ENCODE measurements at regions of chr6 and their contacts with region 1.

Region 1: DNA sequence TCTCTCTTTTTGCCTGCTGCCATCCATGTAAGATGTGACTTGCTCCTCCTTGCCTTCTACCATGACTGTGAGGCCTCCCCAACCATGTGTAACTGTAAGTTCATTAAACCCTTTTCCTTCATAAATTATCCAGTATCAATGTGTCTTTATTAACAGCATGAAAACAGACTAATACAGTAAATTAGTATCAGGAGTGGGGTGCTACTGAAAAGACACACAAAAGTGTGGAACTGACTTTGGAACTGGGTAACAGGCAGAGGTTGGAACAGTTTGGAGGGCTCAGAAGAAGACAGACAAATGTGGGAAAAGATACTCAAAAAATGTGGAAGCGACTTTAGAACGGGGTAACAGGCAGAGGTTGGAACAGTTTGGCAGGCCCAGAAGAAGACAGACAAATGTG is 189.4 kb downstream of the HTR1B start:
- DNase-seq: no peak
- ATAC-seq: no peak
- H3K4me3 ChIP-seq: no peak overlapping the region
- H3K27ac ChIP-seq: no peak overlapping the region
- H3K4me1 ChIP-seq: no peaks in the 10 kb centered on the region
- H3K27me3 ChIP-seq: no peaks in the 10 kb centered on the region
- CTCF ChIP-seq: no peak
- EP300 ChIP-seq: no peak
- POLR2A ChIP-seq: no peak
- RAD21 ChIP-seq: no peak

Region 2: DNA sequence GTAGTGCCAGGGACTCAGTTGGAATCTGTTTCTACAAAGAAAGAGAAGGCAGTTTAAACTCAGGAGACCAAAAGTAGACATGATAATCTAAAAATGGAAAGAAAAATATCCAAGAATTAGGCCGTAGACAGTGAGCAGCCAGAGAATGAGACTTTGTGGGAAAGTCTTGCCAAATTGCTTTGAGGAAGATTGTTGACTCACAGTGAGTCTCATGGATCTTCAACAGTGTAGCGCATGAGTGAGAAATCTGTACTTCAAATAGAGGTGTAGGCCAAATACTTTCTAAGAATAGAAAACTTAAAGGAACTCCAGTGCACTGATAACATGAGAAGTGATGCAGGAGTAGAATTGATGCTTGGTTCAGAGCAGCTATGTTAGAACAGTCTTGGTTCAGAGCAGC is 95.1 kb before region 1 on chr6:
- CTCF ChIA-PET with region 1: no interaction called
- POLR2A ChIA-PET with region 1: no interaction called
- in situ Hi-C with region 1: loop called (anchors 5 kb)
- intact Hi-C with region 1: no loop called
- DNase-seq: no peak
- ATAC-seq: no peak
- H3K4me3 ChIP-seq: no peak overlapping the region
- H3K27ac ChIP-seq: no peak overlapping the region
- H3K4me1 ChIP-seq: no peaks in the 10 kb centered on the region
- H3K27me3 ChIP-seq: no peaks in the 10 kb centered on the region
- CTCF ChIP-seq: no peak
- EP300 ChIP-seq: no peak
- POLR2A ChIP-seq: no peak
- RAD21 ChIP-seq: no peak

Region 3: DNA sequence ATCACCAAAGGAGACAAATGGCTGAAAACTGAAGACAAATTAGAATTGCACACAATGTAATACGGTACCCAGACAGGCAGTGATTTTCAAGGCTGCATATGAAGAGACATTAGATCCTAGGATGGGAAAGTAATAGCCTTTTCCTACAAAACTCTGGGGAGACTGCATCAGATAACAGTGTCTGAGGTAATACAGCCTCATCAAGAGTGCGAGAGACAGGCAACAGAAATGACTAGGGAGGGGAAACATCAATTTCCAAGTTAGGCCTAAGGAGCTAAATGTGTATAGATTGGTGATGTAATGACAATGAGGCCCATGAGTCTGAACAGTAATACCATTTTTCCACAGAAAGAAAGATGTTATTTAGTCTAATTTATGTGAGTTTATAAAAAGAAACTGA is 10.9 kb before region 1 on chr6:
- CTCF ChIA-PET with region 1: no interaction called
- POLR2A ChIA-PET with region 1: no interaction called
- in situ Hi-C with region 1: no loop called
- intact Hi-C with region 1: no loop called
- DNase-seq: no peak
- ATAC-seq: no peak
- H3K4me3 ChIP-seq: no peak overlapping the region
- H3K27ac ChIP-seq: no peak overlapping the region
- H3K4me1 ChIP-seq: no peaks in the 10 kb centered on the region
- H3K27me3 ChIP-seq: no peaks in the 10 kb centered on the region
- CTCF ChIP-seq: no peak
- EP300 ChIP-seq: no peak
- POLR2A ChIP-seq: no peak
- RAD21 ChIP-seq: no peak